ENCODE measurements at regions of chr21 and their contacts with region 1.

Region 1: DNA sequence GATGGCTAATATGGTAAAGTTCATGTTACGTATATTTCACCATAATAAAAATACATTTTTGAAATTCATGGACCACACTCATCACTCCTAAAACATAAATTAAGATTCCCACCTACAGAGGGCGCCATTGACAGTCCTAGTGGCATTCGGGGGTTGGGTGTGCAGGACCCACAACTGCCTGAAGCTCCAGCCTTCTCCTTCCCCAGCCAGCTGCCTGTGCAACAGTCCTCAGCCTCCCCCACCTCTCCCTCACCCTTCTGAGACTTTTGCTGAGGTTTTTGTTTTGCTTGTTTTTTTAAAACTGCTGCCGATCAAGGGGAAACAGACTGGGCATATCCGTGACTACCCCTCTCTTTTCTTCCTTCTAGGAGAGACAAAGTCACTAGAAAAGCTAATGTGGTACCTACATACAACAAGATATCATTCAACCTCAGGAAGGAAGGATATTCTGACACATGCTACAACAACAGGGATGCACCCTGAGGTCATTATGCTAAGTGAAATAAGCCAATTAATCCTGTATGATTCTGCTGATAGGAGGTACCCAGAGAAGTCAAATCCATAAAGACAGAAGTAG is 9.2 kb upstream of the EVA1C start:
- DNase-seq: peak; percentile 70
- H3K4me3 ChIP-seq: no peak overlapping the region
- H3K27ac ChIP-seq: no peak overlapping the region
- H3K4me1 ChIP-seq: no peaks in the 10 kb centered on the region
- H3K27me3 ChIP-seq: no peaks in the 10 kb centered on the region
- CTCF ChIP-seq: peak; percentile 62

Region 2: DNA sequence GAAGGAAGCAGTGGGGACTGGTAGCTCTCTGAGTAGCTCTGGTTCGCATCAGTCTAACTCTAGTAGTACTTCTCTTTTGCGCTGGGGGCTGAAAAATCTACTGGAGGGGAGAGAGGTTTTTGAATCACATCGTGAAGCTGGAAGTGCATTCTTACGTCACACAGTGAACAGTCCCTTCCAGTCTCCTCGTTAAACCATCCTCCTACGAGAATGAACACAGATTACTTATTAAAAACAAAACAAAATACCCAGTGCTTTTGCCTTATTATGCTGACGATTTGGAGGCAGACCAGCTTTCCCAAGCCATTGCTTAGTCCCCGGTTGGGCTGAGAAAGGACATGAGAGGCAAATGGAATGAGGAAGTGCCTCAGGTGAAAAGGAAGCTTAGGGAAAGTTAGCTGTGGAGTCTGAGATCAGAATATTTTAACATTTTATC is 514.3 kb before region 1 on chr21:
- intact Hi-C with region 1: no loop called
- DNase-seq: no peak
- H3K4me3 ChIP-seq: no peak overlapping the region
- H3K27ac ChIP-seq: no peak overlapping the region
- H3K4me1 ChIP-seq: no peaks in the 10 kb centered on the region
- H3K27me3 ChIP-seq: no peaks in the 10 kb centered on the region
- CTCF ChIP-seq: no peak

Region 3: DNA sequence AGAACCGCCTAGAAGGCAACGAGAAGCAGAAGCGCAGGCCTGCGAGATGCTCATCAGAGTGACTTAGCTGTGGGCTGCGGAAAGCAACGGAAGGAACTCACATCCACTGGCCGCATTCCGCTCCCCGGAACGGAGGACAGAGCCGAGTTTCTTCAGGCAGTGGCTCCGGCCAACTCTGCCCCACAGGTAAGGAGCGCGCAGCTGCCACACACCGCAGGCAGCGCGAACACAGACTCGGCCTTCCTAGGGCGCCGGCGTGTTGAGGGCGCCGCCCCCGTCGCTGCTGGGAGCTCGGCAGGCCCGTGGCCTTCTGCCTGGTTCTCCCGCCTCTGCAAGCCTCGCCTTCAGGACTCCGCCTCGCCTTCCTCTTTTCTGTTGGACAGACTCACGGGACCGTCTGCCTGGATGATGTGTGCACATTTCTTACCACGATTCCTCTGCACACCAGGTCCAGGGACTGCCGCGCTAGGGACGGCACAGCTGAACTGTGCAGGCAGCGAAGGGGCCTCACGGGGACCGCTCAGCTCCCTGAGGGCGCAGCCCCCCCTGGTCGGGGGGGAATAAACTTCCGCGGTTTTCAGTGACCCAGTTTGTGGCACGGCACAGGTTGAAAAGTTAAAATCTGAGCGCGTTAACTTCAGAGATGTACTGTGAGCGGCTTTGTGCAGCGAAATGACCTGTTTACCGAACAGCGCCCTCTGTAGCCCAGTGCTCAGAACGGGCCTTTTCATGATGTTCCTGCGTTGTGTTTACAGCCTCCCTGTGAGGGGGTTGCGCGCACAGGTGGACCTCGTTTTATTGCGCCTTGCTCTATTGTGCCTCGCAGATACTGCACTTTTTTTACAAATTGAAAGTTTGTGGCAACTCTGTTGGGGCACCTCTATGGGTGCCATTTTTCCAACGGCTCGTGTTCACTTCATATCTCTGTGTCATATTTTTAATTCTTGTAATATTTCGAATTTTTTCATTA is 166.3 kb after region 1 on chr21:
- intact Hi-C with region 1: loop called (anchors 5 kb)
- DNase-seq: peak; percentile 83
- H3K4me3 ChIP-seq: peak overlapping the region; percentile 54
- H3K27ac ChIP-seq: peak overlapping the region; percentile 78
- H3K4me1 ChIP-seq: no peaks in the 10 kb centered on the region
- H3K27me3 ChIP-seq: no peaks in the 10 kb centered on the region
- CTCF ChIP-seq: peak; percentile 70

Region 4: GRCh38 chr21:32604464-32604863 is 201.2 kb after region 1 on chr21:
- intact Hi-C with region 1: loop called (anchors 5 kb)
- DNase-seq: no peak
- H3K4me3 ChIP-seq: no peak overlapping the region
- H3K27ac ChIP-seq: no peak overlapping the region
- H3K4me1 ChIP-seq: no peaks in the 10 kb centered on the region
- H3K27me3 ChIP-seq: no peaks in the 10 kb centered on the region
- CTCF ChIP-seq: no peak

Region 5: DNA sequence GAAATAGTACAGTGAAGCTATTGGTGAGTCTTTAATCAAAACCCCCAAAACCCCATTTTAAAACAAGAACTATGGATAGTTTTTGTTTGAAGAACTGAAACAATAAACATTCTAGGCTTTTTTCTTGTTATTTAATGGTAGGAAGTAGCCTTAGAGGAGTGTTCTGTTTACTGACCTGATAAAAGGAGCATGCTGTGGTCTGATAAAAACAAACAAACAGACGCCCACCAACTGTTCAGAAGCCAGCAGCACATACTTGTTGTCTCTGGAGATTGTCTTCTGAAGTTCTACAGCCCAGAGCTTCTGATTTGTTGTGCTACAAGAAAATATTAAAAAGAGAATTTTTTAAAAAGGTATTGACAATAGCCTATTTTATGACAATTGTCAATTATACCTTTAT is 263.0 kb after region 1 on chr21:
- intact Hi-C with region 1: no loop called
- DNase-seq: no peak
- H3K4me3 ChIP-seq: no peak overlapping the region
- H3K27ac ChIP-seq: no peak overlapping the region
- H3K4me1 ChIP-seq: no peaks in the 10 kb centered on the region
- H3K27me3 ChIP-seq: no peaks in the 10 kb centered on the region
- CTCF ChIP-seq: no peak